SK-N-SH (cell line): ENCODE measurements at regions of chr18 and their contacts with region 1.

Region 1: DNA sequence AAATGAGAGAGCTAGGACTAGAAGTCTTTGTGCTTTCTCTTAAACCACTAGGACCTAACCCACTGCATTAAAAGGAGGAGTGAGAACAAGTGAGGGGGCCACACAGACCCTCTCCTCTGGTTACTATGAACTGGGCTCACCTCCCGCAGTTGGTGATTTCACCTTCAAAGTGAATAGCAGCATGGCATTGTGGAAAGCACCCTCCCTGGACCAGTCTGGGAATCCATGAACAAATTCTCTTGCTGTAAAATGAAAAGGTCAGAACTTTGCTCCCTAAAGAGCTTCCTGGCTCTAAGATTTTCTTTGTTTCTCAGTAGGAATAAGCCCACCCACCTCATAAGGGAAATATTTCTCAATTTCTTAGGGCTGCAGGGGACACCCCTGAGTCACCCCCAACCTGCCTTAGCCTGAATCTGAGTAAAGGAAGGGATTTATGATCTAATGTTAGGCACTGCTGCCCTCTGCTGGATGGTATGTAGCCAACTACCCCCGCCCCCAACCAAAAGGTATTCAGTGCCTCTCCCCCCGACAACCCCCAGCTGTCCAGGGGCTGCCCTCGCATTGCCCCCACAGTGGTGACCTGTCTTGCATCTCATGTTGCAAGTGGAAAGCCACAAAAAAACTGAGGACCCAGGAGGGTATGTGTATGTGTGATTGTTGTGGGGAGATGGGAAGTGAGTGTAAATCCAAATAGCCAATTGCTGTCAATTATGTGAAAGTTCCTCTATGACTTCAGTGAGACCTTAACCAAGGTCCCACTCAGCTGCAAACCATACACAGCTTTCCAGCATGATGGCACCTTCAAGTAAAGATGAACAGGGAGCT is 230.9 kb upstream of the SLC14A2 start:
- DNase-seq: peak; percentile 60
- H3K4me3 ChIP-seq: peak overlapping the region in 1 of 2 experiments; percentile 28; a peak in 1 of 4 replicates
- H3K27ac ChIP-seq: no peak overlapping the region; a peak in 1 of 4 replicates
- H3K4me1 ChIP-seq: peaks cover 0 to 2% of the 10 kb centered on the region in 2 experiments; a peak in 1 of 4 replicates
- H3K27me3 ChIP-seq: no peaks in the 10 kb centered on the region
- CTCF ChIP-seq: peak; percentile 80
- EP300 ChIP-seq: no peak
- RAD21 ChIP-seq: peak; percentile 82

Region 2: DNA sequence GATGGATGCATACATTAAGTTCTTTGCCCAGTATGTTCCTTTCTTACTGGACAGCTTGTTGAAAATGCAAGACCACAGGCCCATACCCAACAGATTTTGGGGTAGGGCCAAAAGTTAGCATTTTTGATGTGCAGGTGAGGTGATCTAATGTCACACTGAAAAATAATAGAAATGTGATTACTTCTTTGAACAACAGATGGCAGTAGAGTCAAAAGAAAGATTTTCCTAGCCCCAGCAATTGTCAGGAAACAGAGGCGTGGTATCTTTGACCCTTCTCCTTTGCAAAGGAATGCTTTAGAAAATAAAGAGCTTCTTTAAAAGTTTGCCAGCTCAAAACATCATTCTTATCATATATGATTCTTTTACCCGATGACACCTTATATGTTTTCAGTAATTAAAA is 1763.4 kb before region 1 on chr18:
- CTCF ChIA-PET with region 1: interaction called, 19 read pairs
- POLR2A ChIA-PET with region 1: no interaction called
- DNase-seq: peak; percentile 39
- H3K4me3 ChIP-seq: no peak overlapping the region
- H3K27ac ChIP-seq: no peak overlapping the region
- H3K4me1 ChIP-seq: peaks cover 0 to 3% of the 10 kb centered on the region in 2 experiments; a peak in 3 of 4 replicates
- H3K27me3 ChIP-seq: no peaks in the 10 kb centered on the region
- CTCF ChIP-seq: peak; percentile 71
- EP300 ChIP-seq: no peak
- RAD21 ChIP-seq: peak; percentile 88

Region 3: DNA sequence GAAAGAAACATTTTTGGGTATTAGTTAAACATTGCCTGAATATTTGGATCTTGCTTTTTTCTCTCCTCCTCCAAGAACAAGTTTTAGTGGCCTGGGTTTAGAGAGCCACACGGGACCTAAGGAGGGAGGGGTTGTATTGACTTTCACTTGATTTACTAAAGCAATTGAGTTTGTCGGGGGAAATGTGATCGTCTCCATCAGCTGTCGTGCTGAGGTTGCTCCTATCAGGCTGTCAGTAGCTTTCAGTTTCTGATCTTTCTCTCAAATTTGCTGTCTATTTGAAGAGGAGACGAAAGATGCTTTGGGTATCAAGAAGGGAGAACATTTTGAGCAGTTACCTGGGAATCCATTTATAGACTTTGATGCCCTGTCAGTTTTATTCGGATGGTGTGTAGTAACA is 597.7 kb before region 1 on chr18:
- CTCF ChIA-PET with region 1: no interaction called
- POLR2A ChIA-PET with region 1: no interaction called
- DNase-seq: no peak
- H3K4me3 ChIP-seq: no peak overlapping the region
- H3K27ac ChIP-seq: no peak overlapping the region
- H3K4me1 ChIP-seq: peaks cover 17 to 19% of the 10 kb centered on the region in 2 experiments; a peak in 3 of 4 replicates
- H3K27me3 ChIP-seq: no peaks in the 10 kb centered on the region
- CTCF ChIP-seq: no peak
- EP300 ChIP-seq: no peak
- RAD21 ChIP-seq: no peak

Region 4: DNA sequence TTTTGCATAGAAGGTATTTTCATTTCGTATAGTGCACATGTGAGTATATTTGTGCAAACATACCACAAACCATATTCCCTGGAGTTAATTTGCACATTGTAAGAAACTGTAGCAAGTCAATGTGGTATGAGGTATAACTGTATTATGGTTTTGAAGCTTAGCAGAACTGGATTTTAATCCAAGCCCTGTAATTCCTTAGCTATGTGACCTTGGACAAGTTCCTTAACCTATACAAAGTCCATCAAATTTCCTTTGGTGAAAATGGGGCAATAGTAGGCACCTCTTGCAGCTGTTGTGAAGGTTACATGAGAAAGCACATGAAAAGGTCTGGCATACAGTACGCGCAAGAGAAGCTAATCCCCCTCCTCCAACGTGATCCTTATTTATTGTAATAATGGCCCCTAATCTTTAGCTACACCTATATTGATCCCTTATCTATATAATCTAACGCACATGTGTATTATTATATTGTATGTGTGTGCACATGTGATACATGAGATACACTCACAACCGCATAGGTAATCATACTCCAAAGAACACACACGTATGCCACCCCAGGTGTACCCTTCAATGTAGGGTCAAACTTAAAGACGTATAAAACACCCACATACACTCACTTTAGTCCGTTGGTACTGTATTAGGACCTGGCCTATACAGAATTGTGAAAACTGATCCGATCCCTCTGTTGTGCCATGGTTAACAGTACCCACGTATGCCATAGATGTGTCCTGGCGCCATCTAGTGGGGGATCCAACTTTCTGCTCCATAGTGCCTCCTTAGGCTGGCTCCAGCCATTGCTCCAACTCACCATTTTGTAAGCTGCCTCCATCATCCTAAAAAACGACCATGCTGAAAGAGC is 171.9 kb before region 1 on chr18:
- CTCF ChIA-PET with region 1: interaction called, 11 read pairs
- POLR2A ChIA-PET with region 1: no interaction called
- DNase-seq: peak; percentile 51
- H3K4me3 ChIP-seq: peak overlapping the region in 1 of 2 experiments; percentile 43; a peak in 1 of 4 replicates
- H3K27ac ChIP-seq: no peak overlapping the region
- H3K4me1 ChIP-seq: no peaks in the 10 kb centered on the region
- H3K27me3 ChIP-seq: no peaks in the 10 kb centered on the region
- CTCF ChIP-seq: peak; percentile 96
- EP300 ChIP-seq: no peak
- RAD21 ChIP-seq: peak; percentile 94

Region 5: GRCh38 chr18:45248240-45248903 is 136.0 kb before region 1 on chr18:
- CTCF ChIA-PET with region 1: no interaction called
- POLR2A ChIA-PET with region 1: no interaction called
- DNase-seq: no peak
- H3K4me3 ChIP-seq: no peak overlapping the region
- H3K27ac ChIP-seq: peak overlapping the region; percentile 55 to 96
- H3K4me1 ChIP-seq: peaks cover 4 to 21% of the 10 kb centered on the region in 2 experiments; a peak in 2 of 4 replicates
- H3K27me3 ChIP-seq: no peaks in the 10 kb centered on the region
- CTCF ChIP-seq: no peak
- EP300 ChIP-seq: peak; percentile 61 to 85; a peak in 2 of 4 replicates
- RAD21 ChIP-seq: no peak

Region 6: DNA sequence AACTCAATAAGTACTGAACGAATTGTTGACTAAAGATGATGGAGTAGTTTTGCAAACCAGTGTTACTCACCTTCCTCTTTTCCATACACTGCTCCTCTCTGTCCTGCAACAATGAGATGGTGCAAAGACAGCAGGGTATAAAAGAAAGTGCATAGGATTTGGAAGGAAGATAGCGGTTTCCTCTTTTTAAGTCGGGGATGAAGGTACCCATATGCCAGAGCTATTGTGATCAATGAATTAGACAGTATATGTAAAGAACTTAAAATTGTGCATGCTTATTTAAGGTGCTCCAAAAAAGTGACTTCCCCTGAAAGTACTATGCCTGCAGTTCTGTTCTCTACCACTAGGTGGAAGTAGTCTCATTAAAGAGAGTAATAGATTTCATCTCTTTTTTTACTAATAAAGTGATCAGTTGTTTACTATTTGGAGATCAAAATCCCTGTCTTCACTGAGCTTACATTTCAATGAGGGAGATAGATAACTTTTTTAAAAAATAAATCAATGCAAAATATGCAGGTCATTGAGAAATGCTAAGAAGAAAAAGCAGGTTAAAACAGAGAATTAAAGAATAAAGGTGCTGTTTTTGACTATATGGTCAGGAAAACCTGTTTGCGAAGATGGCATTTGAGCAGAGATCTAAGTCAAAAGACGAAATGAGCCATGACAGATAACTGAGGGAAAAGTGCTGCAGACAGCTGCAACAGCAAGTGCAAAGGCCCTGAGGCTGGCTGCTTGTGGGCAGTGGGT is 108.8 kb before region 1 on chr18:
- CTCF ChIA-PET with region 1: interaction called, 72 read pairs
- POLR2A ChIA-PET with region 1: no interaction called
- DNase-seq: no peak
- H3K4me3 ChIP-seq: no peak overlapping the region
- H3K27ac ChIP-seq: no peak overlapping the region
- H3K4me1 ChIP-seq: no peaks in the 10 kb centered on the region
- H3K27me3 ChIP-seq: no peaks in the 10 kb centered on the region
- CTCF ChIP-seq: peak; percentile 78
- EP300 ChIP-seq: no peak
- RAD21 ChIP-seq: peak; percentile 65

Region 7: DNA sequence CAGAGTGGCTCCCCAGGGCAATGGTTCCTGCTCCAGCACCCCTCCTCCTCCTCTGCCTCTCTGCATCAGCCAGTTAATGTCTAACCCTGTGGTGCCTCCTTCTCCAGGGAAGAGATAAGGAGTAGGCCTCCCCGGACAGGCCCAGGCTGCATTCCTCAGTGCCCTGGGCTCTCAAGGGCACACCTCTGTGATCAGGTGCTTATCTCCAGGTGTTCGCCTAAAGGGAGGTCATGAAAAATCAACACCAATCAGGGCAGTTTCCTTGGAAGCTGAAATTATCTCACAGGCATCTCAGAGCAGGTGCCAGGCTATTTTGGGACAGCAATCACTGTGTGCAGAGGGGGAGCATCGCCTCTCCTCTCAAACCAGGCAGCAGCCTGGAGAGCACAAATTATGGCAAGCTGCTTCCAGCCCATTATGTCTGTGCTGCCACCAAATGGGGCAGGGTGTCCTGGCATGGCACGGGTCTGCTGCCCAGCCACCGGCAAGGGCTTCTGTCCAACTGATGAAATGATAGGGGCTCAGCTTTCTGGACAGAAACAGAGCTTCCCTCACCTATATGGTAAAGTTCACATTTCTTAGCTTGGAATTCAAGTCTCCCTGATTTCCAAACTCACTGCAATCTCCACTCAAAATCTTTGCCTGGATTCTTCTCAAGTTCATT is 24.9 kb before region 1 on chr18:
- CTCF ChIA-PET with region 1: interaction called, 12 read pairs
- POLR2A ChIA-PET with region 1: no interaction called
- DNase-seq: peak; percentile 60
- H3K4me3 ChIP-seq: no peak overlapping the region
- H3K27ac ChIP-seq: peak overlapping the region in 1 of 2 experiments; percentile 93; a peak in 2 of 4 replicates
- H3K4me1 ChIP-seq: peaks cover 0 to 31% of the 10 kb centered on the region in 2 experiments; a peak in 2 of 4 replicates
- H3K27me3 ChIP-seq: no peaks in the 10 kb centered on the region
- CTCF ChIP-seq: no peak
- EP300 ChIP-seq: peak in 1 of 2 experiments; percentile 86; a peak in 2 of 4 replicates
- RAD21 ChIP-seq: peak; percentile 43

Region 8: DNA sequence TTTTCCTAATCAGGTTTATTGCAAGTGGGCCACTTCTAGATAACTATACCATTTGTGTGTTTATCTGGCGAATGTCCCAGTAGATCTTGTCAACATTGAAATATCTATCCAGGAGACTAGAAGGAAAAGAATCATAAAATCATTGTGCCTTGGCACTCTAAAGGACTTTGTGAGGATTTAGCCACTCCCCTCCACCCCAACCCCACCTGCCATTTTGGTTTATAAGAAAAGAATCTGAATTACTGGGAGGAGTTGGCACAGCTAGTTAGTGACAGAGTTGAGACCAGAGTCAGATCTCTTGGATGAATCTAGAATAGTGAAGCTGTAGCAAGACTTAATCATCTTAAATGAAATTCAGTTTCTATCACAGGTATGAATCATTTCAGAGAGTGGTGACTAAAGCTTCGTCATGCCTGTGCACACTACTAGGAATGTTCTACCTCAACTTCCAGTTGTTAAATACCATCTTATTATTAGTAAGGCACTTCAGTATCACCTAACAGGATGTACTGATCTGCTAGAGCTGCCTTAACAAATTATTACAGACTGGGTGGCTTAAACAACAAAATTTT is 18.2 kb after region 1 on chr18:
- CTCF ChIA-PET with region 1: interaction called, 22 read pairs
- POLR2A ChIA-PET with region 1: no interaction called
- DNase-seq: no peak
- H3K4me3 ChIP-seq: no peak overlapping the region
- H3K27ac ChIP-seq: peak overlapping the region in 1 of 2 experiments; percentile 27; a peak in 1 of 4 replicates
- H3K4me1 ChIP-seq: 0 out of 4 replicates have a peak, but pooled peaks cover 0 to 3% of the 10 kb centered on the region in 2 experiments
- H3K27me3 ChIP-seq: no peaks in the 10 kb centered on the region
- CTCF ChIP-seq: no peak
- EP300 ChIP-seq: 0 out of 4 replicates have a peak, but pooled peaks of 1 of the 2 experiments have one; percentile 34
- RAD21 ChIP-seq: no peak

Region 9: DNA sequence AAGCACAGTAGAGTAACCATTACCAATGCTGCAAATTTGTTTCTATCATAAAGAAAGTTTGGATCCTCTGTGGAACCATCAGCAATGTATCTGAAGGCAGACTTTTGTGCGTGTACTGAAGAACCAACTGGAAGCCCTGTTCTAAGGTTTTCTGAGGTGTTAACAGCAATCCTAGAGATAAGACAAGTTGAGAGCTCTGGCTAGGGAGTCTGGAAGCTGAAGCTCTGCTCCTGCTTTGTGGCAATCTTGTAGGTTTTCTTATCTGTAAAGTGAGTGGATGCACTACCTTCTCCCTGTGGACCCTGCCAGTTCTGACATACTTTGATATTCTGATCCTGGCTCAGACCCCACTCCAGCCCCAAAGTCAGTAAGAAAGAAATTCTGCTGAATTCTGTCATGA is 59.7 kb after region 1 on chr18:
- CTCF ChIA-PET with region 1: no interaction called
- POLR2A ChIA-PET with region 1: no interaction called
- DNase-seq: no peak
- H3K4me3 ChIP-seq: no peak overlapping the region
- H3K27ac ChIP-seq: no peak overlapping the region
- H3K4me1 ChIP-seq: peaks cover 0 to 5% of the 10 kb centered on the region in 2 experiments; a peak in 2 of 4 replicates
- H3K27me3 ChIP-seq: no peaks in the 10 kb centered on the region
- CTCF ChIP-seq: no peak
- EP300 ChIP-seq: no peak
- RAD21 ChIP-seq: no peak

Region 10: GRCh38 chr18:45526114-45526841 is 141.9 kb after region 1 on chr18:
- CTCF ChIA-PET with region 1: interaction called, 13 read pairs
- POLR2A ChIA-PET with region 1: no interaction called
- DNase-seq: peak; percentile 19
- H3K4me3 ChIP-seq: no peak overlapping the region
- H3K27ac ChIP-seq: peak overlapping the region in 1 of 2 experiments; percentile 53; a peak in 1 of 4 replicates
- H3K4me1 ChIP-seq: peaks cover 3 to 9% of the 10 kb centered on the region in 2 experiments; a peak in 3 of 4 replicates
- H3K27me3 ChIP-seq: no peaks in the 10 kb centered on the region
- CTCF ChIP-seq: peak; percentile 37
- EP300 ChIP-seq: no peak
- RAD21 ChIP-seq: peak; percentile 77

Region 11: GRCh38 chr18:47143899-47144485 is 1759.6 kb after region 1 on chr18:
- CTCF ChIA-PET with region 1: no interaction called
- POLR2A ChIA-PET with region 1: no interaction called
- DNase-seq: no peak
- H3K4me3 ChIP-seq: no peak overlapping the region
- H3K27ac ChIP-seq: no peak overlapping the region
- H3K4me1 ChIP-seq: peaks cover 0 to 6% of the 10 kb centered on the region in 2 experiments; a peak in 2 of 4 replicates
- H3K27me3 ChIP-seq: no peaks in the 10 kb centered on the region
- CTCF ChIP-seq: no peak
- EP300 ChIP-seq: no peak
- RAD21 ChIP-seq: no peak